ENCODE measurements at regions of chr13 and their contacts with region 1.

Region 1: DNA sequence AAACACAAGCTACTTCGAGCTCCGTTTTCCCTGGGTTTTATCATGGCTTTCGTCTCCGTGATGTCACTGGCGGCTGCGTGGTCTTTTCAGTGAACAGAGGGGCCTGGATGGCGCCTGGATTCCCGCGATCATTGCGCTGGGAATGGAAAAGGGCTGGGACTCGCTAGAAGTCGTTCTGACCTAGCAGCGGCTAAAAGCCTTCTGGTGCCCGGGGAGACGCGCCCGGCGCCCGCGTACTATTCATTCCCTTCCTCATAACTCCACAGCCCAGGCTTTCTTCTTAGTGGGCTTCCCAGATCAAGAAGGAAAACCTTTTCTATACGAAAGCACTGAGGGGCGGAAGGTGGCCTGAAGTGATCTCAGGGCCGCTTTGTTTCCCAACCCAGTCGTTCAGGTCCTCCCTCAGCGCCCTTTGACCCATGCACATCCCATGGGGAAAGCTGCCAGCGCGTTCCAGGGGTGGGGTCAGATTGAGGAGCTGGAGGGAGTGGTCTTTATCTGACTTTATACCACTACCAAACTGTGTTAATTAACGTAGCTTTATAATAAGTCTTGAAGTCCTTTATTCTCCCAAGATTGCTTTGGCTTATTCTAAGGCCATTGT is 96.6 kb downstream of the ELF1 start:
- DNase-seq: no peak
- H3K4me3 ChIP-seq: no peak overlapping the region
- H3K4me3 Mint-ChIP-seq: peak overlapping the region; percentile 63 to 83 (median 73)
- H3K27ac ChIP-seq: no peak overlapping the region
- H3K27ac Mint-ChIP-seq: peak overlapping the region in 6 of 7 donors; percentile 70 to 90 (median 80)
- H3K4me1 ChIP-seq: peaks cover 15% of the 10 kb centered on the region
- H3K4me1 Mint-ChIP-seq: peaks cover 12 to 29% (median 21%) of the 10 kb centered on the region in 4 donors
- H3K27me3 ChIP-seq: no peaks in the 10 kb centered on the region
- H3K27me3 Mint-ChIP-seq: no peaks in the 10 kb centered on the region

Region 2: DNA sequence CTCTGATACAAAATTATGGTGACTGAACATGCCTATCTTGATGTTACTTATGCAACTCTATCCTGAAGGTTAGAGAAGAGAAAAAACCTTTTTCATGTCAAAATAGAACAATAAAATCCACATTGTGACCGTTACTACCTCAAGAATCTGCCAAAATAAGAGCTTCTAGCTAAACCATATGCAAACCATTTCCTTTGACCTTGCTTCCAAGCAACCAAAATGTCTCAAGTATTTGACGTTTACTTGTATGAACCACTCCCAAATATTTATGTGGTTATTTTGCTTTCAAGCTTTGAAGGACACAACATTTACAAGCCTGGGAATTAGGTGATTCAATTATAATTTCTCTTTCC is 270.0 kb before region 1 on chr13:
- CTCF ChIA-PET with region 1: no interaction called
- POLR2A ChIA-PET with region 1: no interaction called
- intact Hi-C with region 1: no loop called
- DNase-seq: peak in 2 of 5 donors; percentile 32 to 39
- H3K4me3 ChIP-seq: peak overlapping the region in 1 of 2 donors; percentile 29
- H3K4me3 Mint-ChIP-seq: peak overlapping the region; percentile 69 to 88 (median 80)
- H3K27ac ChIP-seq: no peak overlapping the region
- H3K27ac Mint-ChIP-seq: peak overlapping the region; percentile 82 to 95 (median 90)
- H3K4me1 ChIP-seq: peaks cover 97% of the 10 kb centered on the region
- H3K4me1 Mint-ChIP-seq: peaks cover 61 to 99% (median 86%) of the 10 kb centered on the region in 4 donors
- H3K27me3 ChIP-seq: no peaks in the 10 kb centered on the region
- H3K27me3 Mint-ChIP-seq: no peaks in the 10 kb centered on the region

Region 3: GRCh38 chr13:40789275-40790133 is 133.0 kb before region 1 on chr13 and contains the start of gene SLC25A15:
- CTCF ChIA-PET with region 1: interaction called, 4 read pairs
- POLR2A ChIA-PET with region 1: interaction called, 13 read pairs
- intact Hi-C with region 1: no loop called
- DNase-seq: peak; percentile 62 to 80 (median 72)
- H3K4me3 ChIP-seq: peak within 1 kb of the TSS; percentile 17 to 63
- H3K4me3 Mint-ChIP-seq: peak within 1 kb of the TSS; percentile 81 to 89 (median 83)
- H3K27ac ChIP-seq: peak within 1 kb of the TSS; percentile 56
- H3K27ac Mint-ChIP-seq: peak within 1 kb of the TSS; percentile 64 to 94 (median 85)
- H3K4me1 ChIP-seq: peaks cover 7% of the 10 kb centered on the region
- H3K4me1 Mint-ChIP-seq: peaks cover 12 to 39% (median 24%) of the 10 kb centered on the region in 4 donors
- H3K27me3 ChIP-seq: no peaks in the 10 kb centered on the region
- H3K27me3 Mint-ChIP-seq: no peaks in the 10 kb centered on the region
- total RNA-seq, gene SLC25A15: 7.9 to 8.5 TPM

Region 4: GRCh38 chr13:40933508-40934204 is 11.1 kb after region 1 on chr13:
- CTCF ChIA-PET with region 1: interaction called, 13 read pairs
- POLR2A ChIA-PET with region 1: interaction called, 15 read pairs
- intact Hi-C with region 1: no loop called
- DNase-seq: no peak
- H3K4me3 ChIP-seq: no peak overlapping the region
- H3K4me3 Mint-ChIP-seq: peak overlapping the region in 2 of 8 donors; percentile 35 to 43
- H3K27ac ChIP-seq: no peak overlapping the region
- H3K27ac Mint-ChIP-seq: peak overlapping the region in 6 of 7 donors; percentile 10 to 78 (median 75)
- H3K4me1 ChIP-seq: peaks cover 30% of the 10 kb centered on the region
- H3K4me1 Mint-ChIP-seq: peaks cover 17 to 28% (median 21%) of the 10 kb centered on the region in 4 donors
- H3K27me3 ChIP-seq: no peaks in the 10 kb centered on the region
- H3K27me3 Mint-ChIP-seq: no peaks in the 10 kb centered on the region

Region 5: DNA sequence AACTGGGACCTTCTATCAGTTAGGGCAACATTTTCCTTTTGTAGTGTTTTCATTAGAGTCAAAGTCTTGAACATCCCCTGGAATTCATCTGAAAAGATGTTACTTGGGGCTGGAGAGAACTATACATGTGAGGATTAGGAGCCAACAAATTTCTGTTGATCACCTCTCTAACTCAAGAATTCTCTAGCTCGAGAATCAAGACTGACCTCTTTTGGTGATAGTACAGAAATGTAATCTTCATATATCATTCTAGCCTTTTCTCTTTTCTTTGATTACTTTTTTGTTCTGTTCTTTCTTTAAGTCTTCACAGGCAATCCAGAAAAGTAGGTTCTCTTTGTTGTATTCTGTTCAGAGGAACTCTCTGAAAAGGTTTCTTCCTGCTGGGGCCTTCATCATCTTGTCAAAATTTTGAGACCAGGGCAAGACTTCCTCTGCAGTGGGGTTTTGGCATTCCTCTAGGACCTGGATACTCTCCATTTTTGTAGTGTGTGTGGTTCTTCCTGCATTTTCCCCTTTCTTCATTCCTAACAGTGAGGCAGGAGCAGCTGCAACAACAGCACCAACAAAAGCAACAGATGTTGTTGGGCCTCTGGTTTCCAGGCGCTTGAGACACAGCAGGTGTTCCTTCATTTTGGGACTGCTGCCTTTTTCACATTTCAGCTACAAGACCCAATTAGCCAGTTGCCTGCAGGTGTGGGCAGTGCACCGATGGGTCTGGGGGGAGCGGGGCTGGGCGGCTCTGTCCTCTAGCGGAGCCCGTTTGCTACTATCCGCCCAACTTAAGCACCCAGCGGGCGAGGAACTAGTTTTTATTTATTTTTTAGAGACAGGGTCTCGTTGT is 70.4 kb after region 1 on chr13:
- CTCF ChIA-PET with region 1: interaction called, 17 read pairs
- POLR2A ChIA-PET with region 1: interaction called, 6 read pairs
- intact Hi-C with region 1: no loop called
- DNase-seq: no peak
- H3K4me3 ChIP-seq: no peak overlapping the region
- H3K4me3 Mint-ChIP-seq: peak overlapping the region in 6 of 8 donors; percentile 9 to 65 (median 35)
- H3K27ac ChIP-seq: peak overlapping the region; percentile 41
- H3K27ac Mint-ChIP-seq: peak overlapping the region; percentile 65 to 94 (median 85)
- H3K4me1 ChIP-seq: peaks cover 93% of the 10 kb centered on the region
- H3K4me1 Mint-ChIP-seq: peaks cover 54 to 87% (median 69%) of the 10 kb centered on the region in 4 donors
- H3K27me3 ChIP-seq: no peaks in the 10 kb centered on the region
- H3K27me3 Mint-ChIP-seq: no peaks in the 10 kb centered on the region

Region 6: GRCh38 chr13:41019011-41019487 is 96.5 kb after region 1 on chr13 and contains the start of gene ELF1:
- CTCF ChIA-PET with region 1: interaction called, 17 read pairs
- POLR2A ChIA-PET with region 1: interaction called, 23 read pairs
- intact Hi-C with region 1: loop called (anchors 2 kb)
- DNase-seq: peak; percentile 74 to 89 (median 80)
- H3K4me3 ChIP-seq: peak within 1 kb of the TSS; percentile 65 to 72
- H3K4me3 Mint-ChIP-seq: peak within 1 kb of the TSS; percentile 83 to 98 (median 95)
- H3K27ac ChIP-seq: peak within 1 kb of the TSS; percentile 85
- H3K27ac Mint-ChIP-seq: peak within 1 kb of the TSS; percentile 90 to 99 (median 96)
- H3K4me1 ChIP-seq: peaks cover 34% of the 10 kb centered on the region
- H3K4me1 Mint-ChIP-seq: peaks cover 26 to 39% (median 33%) of the 10 kb centered on the region in 4 donors
- H3K27me3 ChIP-seq: no peaks in the 10 kb centered on the region
- H3K27me3 Mint-ChIP-seq: no peaks in the 10 kb centered on the region
- total RNA-seq, gene ELF1: 188 to 192 TPM

Region 7: DNA sequence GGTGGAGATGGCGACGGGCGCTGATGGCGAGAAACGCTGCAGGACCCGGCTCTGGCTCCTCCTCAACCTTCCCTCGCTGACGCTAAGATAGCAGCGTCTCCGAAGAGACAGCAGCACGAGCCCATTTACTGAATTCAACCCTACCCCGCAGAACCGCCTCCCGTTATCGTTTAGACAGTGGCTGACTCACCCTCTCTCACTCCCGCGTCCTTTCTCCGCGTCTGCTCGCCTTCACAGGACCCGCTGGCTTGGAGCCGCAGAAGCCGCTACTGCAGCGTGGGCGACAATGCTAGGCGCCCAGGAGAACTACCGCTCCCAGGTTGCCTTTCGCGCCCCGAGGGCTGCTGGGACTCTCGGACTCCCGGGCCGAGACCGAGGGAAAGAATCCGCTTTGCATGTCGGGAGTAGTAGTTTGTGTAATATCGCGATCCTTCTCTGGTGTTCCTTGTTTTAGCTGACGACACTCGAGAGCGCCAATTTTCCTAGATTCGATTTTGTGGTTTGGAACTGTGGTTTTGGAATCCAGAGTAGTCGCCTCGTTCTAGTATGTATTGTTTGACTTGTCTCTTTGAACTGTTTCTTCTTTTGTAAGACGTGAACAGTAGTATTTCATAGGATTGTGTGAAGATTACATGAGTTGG is 210.1 kb after region 1 on chr13 and contains the start of gene KBTBD6:
- CTCF ChIA-PET with region 1: no interaction called
- POLR2A ChIA-PET with region 1: no interaction called
- intact Hi-C with region 1: loop called (anchors 5 kb)
- DNase-seq: peak; percentile 89 to 95 (median 90)
- H3K4me3 ChIP-seq: peak within 1 kb of the TSS; percentile 56
- H3K4me3 Mint-ChIP-seq: peak within 1 kb of the TSS; percentile 95 to 100 (median 99)
- H3K27ac ChIP-seq: peak within 1 kb of the TSS; percentile 63
- H3K27ac Mint-ChIP-seq: peak within 1 kb of the TSS; percentile 91 to 98 (median 98)
- H3K4me1 ChIP-seq: peaks cover 49% of the 10 kb centered on the region
- H3K4me1 Mint-ChIP-seq: peaks cover 39 to 55% (median 46%) of the 10 kb centered on the region in 4 donors
- H3K27me3 ChIP-seq: no peaks in the 10 kb centered on the region
- H3K27me3 Mint-ChIP-seq: no peaks in the 10 kb centered on the region
- total RNA-seq, gene KBTBD6: 9.9 to 10.5 TPM

Region 8: GRCh38 chr13:41193919-41194824 is 271.6 kb after region 1 on chr13 and contains the start of gene KBTBD7:
- CTCF ChIA-PET with region 1: no interaction called
- POLR2A ChIA-PET with region 1: no interaction called
- intact Hi-C with region 1: loop called (anchors 5 kb)
- DNase-seq: peak; percentile 83 to 90 (median 86)
- H3K4me3 ChIP-seq: peak within 1 kb of the TSS; percentile 18 to 94
- H3K4me3 Mint-ChIP-seq: peak within 1 kb of the TSS; percentile 93 to 97 (median 94)
- H3K27ac ChIP-seq: peak within 1 kb of the TSS; percentile 72
- H3K27ac Mint-ChIP-seq: peak within 1 kb of the TSS; percentile 72 to 97 (median 92)
- H3K4me1 ChIP-seq: peaks cover 29% of the 10 kb centered on the region
- H3K4me1 Mint-ChIP-seq: peaks cover 23 to 45% (median 33%) of the 10 kb centered on the region in 4 donors
- H3K27me3 ChIP-seq: no peaks in the 10 kb centered on the region
- H3K27me3 Mint-ChIP-seq: no peaks in the 10 kb centered on the region
- total RNA-seq, gene KBTBD7: 11.1 to 11.8 TPM

Measured in CD4-positive, alpha-beta memory T cell (primary cell).